ENCODE measurements at regions of chr12 and their contacts with region 1.

Region 1: DNA sequence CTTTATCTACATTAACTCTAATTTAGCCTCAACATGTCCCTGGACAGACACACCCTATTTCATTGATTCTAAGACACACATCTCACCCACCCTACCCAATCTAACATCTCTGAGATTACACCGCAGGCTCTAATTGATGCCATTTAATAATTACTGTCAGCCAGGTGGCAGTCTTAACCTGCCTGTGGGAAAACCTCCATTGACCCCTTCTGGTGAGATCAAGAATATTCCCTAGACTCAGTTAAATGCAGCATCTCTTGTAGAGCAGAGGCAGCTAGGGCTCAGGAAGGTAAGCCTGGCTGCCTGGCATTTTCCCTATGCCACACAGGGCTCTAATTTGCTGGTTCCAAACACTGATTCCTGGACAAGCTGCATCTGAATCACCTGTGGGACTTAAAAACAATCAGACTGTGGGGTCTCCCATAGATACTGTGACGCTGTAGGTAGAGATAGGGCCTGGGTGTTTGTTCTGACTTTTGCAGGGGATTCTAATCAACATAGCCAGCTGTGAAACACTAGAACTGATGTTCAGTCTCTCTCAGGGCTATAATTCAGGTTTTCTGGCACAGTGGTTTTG is 14.3 kb downstream of the MCRS1 start:
- DNase-seq: no peak
- ATAC-seq: peak; percentile 79
- H3K4me3 ChIP-seq: no peak overlapping the region
- H3K27ac ChIP-seq: no peak overlapping the region
- H3K4me1 ChIP-seq: no peaks in the 10 kb centered on the region
- H3K27me3 ChIP-seq: peaks cover 0 to 6% of the 10 kb centered on the region in 2 experiments; a peak in 2 of 4 replicates
- CTCF ChIP-seq: peak; percentile 57 to 89 (median 58); a peak in 5 of 6 replicates
- EP300 ChIP-seq: no peak
- POLR2A ChIP-seq: no peak
- RAD21 ChIP-seq: peak; percentile 73

Region 2: DNA sequence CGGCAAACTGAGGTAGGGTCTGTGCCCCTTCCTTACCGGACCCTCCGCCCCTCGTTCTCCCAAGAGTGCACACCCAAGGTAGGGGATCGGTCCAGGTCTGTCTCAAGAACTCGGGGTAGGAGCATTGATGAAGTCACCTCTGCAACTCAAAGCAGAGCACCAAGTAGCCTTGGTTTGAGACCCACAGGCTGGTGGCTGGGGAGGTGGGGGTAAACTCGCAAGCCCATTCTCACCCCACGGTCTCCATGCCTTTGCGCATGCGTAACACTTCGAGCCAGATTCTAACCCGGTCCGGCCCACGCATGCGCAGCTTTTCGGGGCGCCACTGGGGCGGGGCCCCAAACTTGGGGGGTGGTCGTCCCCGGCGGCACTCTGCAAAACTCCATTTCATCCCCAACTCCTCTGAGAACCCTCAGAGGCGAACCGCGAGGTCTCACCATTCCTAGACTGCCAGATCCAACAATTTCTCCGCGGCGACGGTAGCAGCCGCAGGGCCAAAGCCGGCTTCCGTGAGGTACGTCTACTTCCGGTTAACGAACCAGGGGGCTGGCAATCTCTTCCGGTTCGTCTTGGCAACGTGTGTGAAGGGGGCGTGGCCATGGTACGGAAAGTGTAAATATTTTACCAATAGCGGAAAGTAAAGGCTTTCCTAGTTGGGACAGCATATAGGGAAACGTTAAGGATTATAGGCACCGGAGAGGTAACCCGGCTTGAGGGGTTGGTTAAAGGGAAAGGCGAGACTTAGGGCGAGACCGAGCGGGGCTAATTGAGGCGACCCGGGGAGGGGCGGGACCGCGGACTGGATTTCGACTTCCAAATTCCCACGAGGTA is 14.2 kb after region 1 on chr12 and contains the start of gene MCRS1:
- CTCF ChIA-PET with region 1: interaction called, 12 read pairs
- POLR2A ChIA-PET with region 1: no interaction called
- RAD21 ChIA-PET with region 1: no interaction called
- SMC1A ChIA-PET with region 1: interaction called, 5 read pairs
- in situ Hi-C with region 1: no loop called
- intact Hi-C with region 1: no loop called
- DNase-seq: peak; percentile 80
- ATAC-seq: peak; percentile 92
- H3K4me3 ChIP-seq: peak within 1 kb of the TSS; percentile 99
- H3K27ac ChIP-seq: peak within 1 kb of the TSS; percentile 91
- H3K4me1 ChIP-seq: peaks cover 8% of the 10 kb centered on the region
- H3K27me3 ChIP-seq: no peaks in the 10 kb centered on the region
- CTCF ChIP-seq: no peak
- EP300 ChIP-seq: no peak
- POLR2A ChIP-seq: peak; percentile 98
- RAD21 ChIP-seq: no peak
- polyA plus RNA-seq, gene MCRS1: 34.3 to 52.4 TPM

Region 3: DNA sequence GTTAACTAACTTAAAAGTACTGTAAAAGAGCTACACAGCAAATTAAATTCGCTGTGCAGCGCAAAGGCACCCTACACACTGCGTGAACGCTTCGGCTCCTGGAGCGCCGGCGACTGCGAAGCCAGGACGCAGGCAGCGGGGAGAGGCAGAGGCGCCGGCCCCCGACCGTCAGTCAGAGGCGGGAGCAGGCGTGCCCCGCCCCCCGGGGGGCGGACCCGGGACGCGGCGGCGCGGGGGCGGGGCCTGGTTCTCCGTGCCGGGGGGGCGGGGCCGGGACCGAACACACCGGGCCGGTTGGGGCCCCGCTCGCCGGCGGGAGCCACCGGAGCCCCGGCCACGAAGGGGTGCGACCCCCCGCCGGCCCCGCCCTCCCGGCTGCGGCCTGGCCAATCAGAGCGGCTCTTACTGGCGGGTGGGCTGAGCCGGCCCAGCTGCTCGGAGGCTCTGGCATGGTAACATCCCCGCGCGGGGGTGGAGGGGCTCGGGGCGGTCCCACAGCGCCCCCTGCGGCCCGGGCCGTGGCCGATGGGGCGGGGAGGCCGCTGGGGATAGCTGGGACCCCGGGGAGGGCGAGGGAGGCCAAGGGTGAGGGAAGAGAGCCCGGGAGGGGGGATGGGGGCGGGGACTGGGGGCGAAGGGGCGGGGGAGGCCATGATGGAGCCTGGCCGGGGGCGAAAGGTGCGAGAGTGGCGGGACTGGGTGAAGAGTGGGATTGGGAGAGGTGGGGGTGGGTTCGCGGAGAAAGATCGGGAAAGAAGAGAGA is 69.7 kb after region 1 on chr12 and contains the start of gene PRPF40B:
- CTCF ChIA-PET with region 1: interaction called, 20 read pairs
- POLR2A ChIA-PET with region 1: no interaction called
- RAD21 ChIA-PET with region 1: interaction called, 8 read pairs
- SMC1A ChIA-PET with region 1: interaction called, 3 read pairs
- in situ Hi-C with region 1: no loop called
- intact Hi-C with region 1: no loop called
- DNase-seq: peak; percentile 36
- ATAC-seq: peak; percentile 87
- H3K4me3 ChIP-seq: peak within 1 kb of the TSS; percentile 85
- H3K27ac ChIP-seq: peak within 1 kb of the TSS; percentile 75
- H3K4me1 ChIP-seq: peaks cover 17% of the 10 kb centered on the region
- H3K27me3 ChIP-seq: no peaks in the 10 kb centered on the region
- CTCF ChIP-seq: peak; percentile 33 to 66 (median 57)
- EP300 ChIP-seq: no peak
- POLR2A ChIP-seq: peak; percentile 90
- RAD21 ChIP-seq: peak; percentile 40; the same call in 1 of the 2 replicates
- polyA plus RNA-seq, gene PRPF40B: 0.31 to 1.2 TPM